ENCODE measurements at regions of chr22 and their contacts with region 1.

Region 1: GRCh38 chr22:46798366-46799350 is 36.2 kb downstream of the TBC1D22A start:
- DNase-seq: no peak
- H3K4me3 ChIP-seq: no peak overlapping the region
- H3K27ac ChIP-seq: no peak overlapping the region
- H3K4me1 ChIP-seq: no peaks in the 10 kb centered on the region
- H3K27me3 ChIP-seq: no peaks in the 10 kb centered on the region
- CTCF ChIP-seq: peak; percentile 26 to 78 (median 61)
- POLR2A ChIP-seq: no peak

Region 2: GRCh38 chr22:46788441-46789172 is 10.1 kb before region 1 on chr22:
- intact Hi-C with region 1: no loop called
- DNase-seq: peak; percentile 32
- H3K4me3 ChIP-seq: no peak overlapping the region
- H3K27ac ChIP-seq: no peak overlapping the region
- H3K4me1 ChIP-seq: no peaks in the 10 kb centered on the region
- H3K27me3 ChIP-seq: no peaks in the 10 kb centered on the region
- CTCF ChIP-seq: no peak
- POLR2A ChIP-seq: no peak

Region 3: GRCh38 chr22:47107431-47107830 is 308.8 kb after region 1 on chr22:
- intact Hi-C with region 1: no loop called
- DNase-seq: no peak
- H3K4me3 ChIP-seq: no peak overlapping the region
- H3K27ac ChIP-seq: no peak overlapping the region
- H3K4me1 ChIP-seq: no peaks in the 10 kb centered on the region
- H3K27me3 ChIP-seq: no peaks in the 10 kb centered on the region
- CTCF ChIP-seq: no peak
- POLR2A ChIP-seq: no peak

Region 4: DNA sequence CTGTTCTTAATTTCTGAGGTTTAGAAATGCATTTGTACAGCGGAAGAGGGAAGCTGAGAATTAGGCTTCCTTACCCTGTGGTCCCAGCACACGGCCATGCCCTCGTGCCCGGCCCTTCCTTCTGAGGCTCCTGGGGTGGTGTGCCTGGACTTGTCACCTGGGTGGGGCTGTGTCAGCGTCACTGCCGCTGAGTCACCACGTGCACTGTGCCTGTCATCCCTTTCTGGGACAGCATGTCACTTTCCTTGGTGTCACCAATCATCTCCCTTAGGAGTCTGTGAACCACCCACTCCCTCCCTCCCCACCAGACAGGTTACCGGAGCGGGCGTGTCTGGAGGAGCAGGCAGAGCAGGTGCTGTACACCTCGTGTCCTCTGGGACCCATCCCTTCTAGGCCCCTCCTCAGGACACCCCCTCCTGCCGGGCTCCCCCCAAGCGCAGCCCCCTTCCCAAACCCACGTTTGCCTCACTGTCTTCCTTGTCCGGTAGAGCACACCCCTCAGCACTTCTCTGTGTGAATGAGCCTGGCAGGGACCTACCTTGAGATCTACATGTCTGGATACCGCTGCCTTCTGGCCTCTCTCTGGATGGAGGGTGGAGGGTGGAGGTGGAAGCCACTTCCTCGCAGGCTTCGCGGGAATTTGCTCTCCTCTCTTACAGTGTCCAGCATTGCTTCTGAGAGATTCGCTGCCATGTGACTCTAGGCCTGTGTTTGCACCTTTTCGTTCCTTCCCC is 331.4 kb after region 1 on chr22:
- intact Hi-C with region 1: no loop called
- DNase-seq: peak; percentile 75
- H3K4me3 ChIP-seq: no peak overlapping the region
- H3K27ac ChIP-seq: no peak overlapping the region
- H3K4me1 ChIP-seq: no peaks in the 10 kb centered on the region
- H3K27me3 ChIP-seq: no peaks in the 10 kb centered on the region
- CTCF ChIP-seq: no peak
- POLR2A ChIP-seq: peak; percentile 52

Region 5: GRCh38 chr22:48492366-48493320 is 1694.0 kb after region 1 on chr22:
- intact Hi-C with region 1: loop called (anchors 5 kb)
- DNase-seq: peak; percentile 63
- H3K4me3 ChIP-seq: no peak overlapping the region
- H3K27ac ChIP-seq: no peak overlapping the region
- H3K4me1 ChIP-seq: peaks cover 10% of the 10 kb centered on the region
- H3K27me3 ChIP-seq: peaks cover 16% of the 10 kb centered on the region
- CTCF ChIP-seq: peak; percentile 38 to 81 (median 69)
- POLR2A ChIP-seq: no peak

Measured in prostate gland (tissue), 2 donors.